Activated T-helper 1 cell treated with anti-CD3 and anti-CD28 coated beads, Interleukin-12 subunit alpha, Interleukin-12 subunit beta, Interleukin-2, Interleukin-4 antibody, amounts not matched to agents 30 ng/mL and 10 ng/mL and 1 ng/mL, durations not matched to agents 14 hours and 24 hours and 36 hours (primary cell): ENCODE measurements at regions of chr14 and their contacts with region 1.

Region 1: GRCh38 chr14:36519431-36520321 is at the start of gene NKX2-1:
- DNase-seq: no peak
- H3K4me3 Mint-ChIP-seq: peak within 1 kb of the TSS; percentile 37
- H3K27ac Mint-ChIP-seq: peak within 1 kb of the TSS; percentile 70
- H3K4me1 Mint-ChIP-seq: no peaks in the 10 kb centered on the region
- H3K27me3 Mint-ChIP-seq: peaks cover 65% of the 10 kb centered on the region
- total RNA-seq, gene NKX2-1: not detected in 2 replicates

Region 2: GRCh38 chr14:36655963-36656686 is 136.4 kb after region 1 on chr14:
- intact Hi-C with region 1: loop called (anchors 2 kb)
- DNase-seq: no peak
- H3K4me3 Mint-ChIP-seq: no peak overlapping the region
- H3K27ac Mint-ChIP-seq: no peak overlapping the region
- H3K4me1 Mint-ChIP-seq: peaks cover 5% of the 10 kb centered on the region
- H3K27me3 Mint-ChIP-seq: peaks cover 77% of the 10 kb centered on the region